ENCODE measurements at regions of chr6 and their contacts with region 1.

Region 1: GRCh38 chr6:7723041-7723447 is 2.9 kb upstream of the BMP6 start:
- DNase-seq: peak in 1 of 2 donors; percentile 90
- H3K4me3 ChIP-seq: no peak overlapping the region
- H3K27ac ChIP-seq: no peak overlapping the region
- H3K4me1 ChIP-seq: peaks cover 16% of the 10 kb centered on the region
- H3K27me3 ChIP-seq: no peaks in the 10 kb centered on the region
- CTCF ChIP-seq: peak; percentile 23 to 65 (median 45)
- POLR2A ChIP-seq: no peak

Region 2: GRCh38 chr6:7561153-7561964 is 161.7 kb before region 1 on chr6:
- intact Hi-C with region 1: no loop called
- DNase-seq: no peak
- H3K4me3 ChIP-seq: no peak overlapping the region
- H3K27ac ChIP-seq: no peak overlapping the region
- H3K4me1 ChIP-seq: no peaks in the 10 kb centered on the region
- H3K27me3 ChIP-seq: no peaks in the 10 kb centered on the region
- CTCF ChIP-seq: no peak
- POLR2A ChIP-seq: no peak

Region 3: DNA sequence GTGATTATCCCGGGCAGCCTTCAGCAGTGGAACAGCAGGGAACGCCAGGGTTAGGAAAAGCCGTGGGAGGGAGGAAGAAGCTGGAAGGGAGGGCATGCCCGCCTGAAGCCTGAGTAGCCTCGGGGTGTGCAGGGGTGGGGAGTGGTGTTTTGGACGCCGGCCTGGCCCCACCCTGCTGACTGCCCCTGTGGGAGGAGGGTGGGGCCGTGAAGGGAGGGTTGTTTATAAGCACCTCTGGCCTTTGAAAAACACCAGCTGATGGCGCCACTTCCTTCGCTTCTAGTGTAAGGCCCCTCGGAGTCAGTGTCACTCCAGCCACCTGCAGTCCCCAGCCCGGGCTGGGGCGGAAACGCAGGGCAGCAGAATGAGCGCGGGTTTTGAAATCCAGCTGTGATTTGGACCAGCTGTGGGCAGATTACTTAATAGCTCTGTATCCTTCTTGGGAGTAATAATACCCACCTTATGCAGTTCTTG is 49.9 kb before region 1 on chr6:
- intact Hi-C with region 1: no loop called
- DNase-seq: no peak
- H3K4me3 ChIP-seq: peak overlapping the region; percentile 8 to 24
- H3K27ac ChIP-seq: no peak overlapping the region
- H3K4me1 ChIP-seq: peaks cover 14% of the 10 kb centered on the region
- H3K27me3 ChIP-seq: no peaks in the 10 kb centered on the region
- CTCF ChIP-seq: no peak
- POLR2A ChIP-seq: no peak

Region 4: GRCh38 chr6:7996538-7997111 is 273.6 kb after region 1 on chr6:
- intact Hi-C with region 1: loop called (anchors 5 kb)
- DNase-seq: no peak
- H3K4me3 ChIP-seq: no peak overlapping the region
- H3K27ac ChIP-seq: no peak overlapping the region
- H3K4me1 ChIP-seq: peaks cover 13% of the 10 kb centered on the region
- H3K27me3 ChIP-seq: no peaks in the 10 kb centered on the region
- CTCF ChIP-seq: no peak
- POLR2A ChIP-seq: no peak

Region 5: DNA sequence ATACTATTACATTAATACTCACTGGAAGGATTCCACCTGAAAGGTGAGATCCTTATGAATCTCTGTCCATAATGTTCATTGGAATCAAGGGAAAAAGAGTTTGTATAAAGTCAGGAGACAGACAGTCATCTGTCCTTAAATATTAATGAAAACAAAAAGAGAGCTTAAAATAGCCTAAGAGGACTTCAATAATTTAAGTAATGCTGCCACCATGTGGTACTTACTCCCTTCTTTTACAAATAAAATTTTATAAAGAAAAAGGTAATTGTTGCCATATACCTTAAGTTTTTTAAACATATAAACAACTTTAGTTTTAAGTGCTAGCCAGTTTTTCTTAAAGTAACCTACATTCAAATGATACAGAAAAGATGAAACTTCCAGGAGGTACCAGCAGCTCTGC is 336.1 kb after region 1 on chr6:
- intact Hi-C with region 1: loop called (anchors 5 kb)
- DNase-seq: no peak
- H3K4me3 ChIP-seq: no peak overlapping the region
- H3K27ac ChIP-seq: no peak overlapping the region
- H3K4me1 ChIP-seq: peaks cover 8% of the 10 kb centered on the region
- H3K27me3 ChIP-seq: no peaks in the 10 kb centered on the region
- CTCF ChIP-seq: no peak
- POLR2A ChIP-seq: no peak

Measured in vagina (tissue), 2 donors.